ENCODE measurements at regions of chr11 and their contacts with region 1.

Region 1: DNA sequence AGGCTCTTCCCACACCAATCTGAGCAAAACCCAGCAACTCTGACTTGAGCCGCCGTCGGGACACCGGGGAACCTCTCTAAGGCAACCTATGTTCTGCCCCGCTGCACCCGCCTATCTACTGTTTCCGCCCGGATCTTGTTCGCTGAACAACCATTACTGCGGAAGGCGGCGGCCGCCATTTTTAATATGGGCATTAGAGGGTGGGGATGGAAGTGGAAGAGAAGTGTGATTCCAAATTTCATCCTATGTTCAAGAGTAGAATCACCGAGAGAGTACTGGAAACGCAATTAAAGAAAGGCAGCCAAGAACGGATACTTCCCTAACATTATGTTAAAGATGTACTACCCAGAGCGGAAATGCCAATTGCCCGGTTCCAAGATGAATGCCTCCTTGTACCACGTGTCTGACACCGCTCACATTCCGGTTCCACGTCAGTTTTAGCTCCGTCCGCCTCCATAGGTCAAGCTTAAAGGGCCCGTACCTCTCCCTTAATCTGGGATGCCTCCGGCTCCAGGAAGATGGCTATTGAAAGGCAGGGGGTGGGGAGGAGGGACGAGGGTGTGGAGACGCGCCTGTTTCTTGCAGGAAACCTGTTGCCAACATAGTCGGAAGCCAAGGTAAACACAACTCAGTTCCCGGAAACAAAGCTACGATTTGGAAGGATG is at the start of gene DPAGT1:
- DNase-seq: peak; percentile 81
- ATAC-seq: peak; percentile 82
- H3K4me3 Mint-ChIP-seq: peak within 1 kb of the TSS; percentile 95
- H3K27ac Mint-ChIP-seq: peak within 1 kb of the TSS; percentile 99
- H3K4me1 Mint-ChIP-seq: peaks cover 30% of the 10 kb centered on the region
- H3K27me3 Mint-ChIP-seq: no peaks in the 10 kb centered on the region
- total RNA-seq, gene DPAGT1: 43.2 to 56.1 TPM

Region 2: DNA sequence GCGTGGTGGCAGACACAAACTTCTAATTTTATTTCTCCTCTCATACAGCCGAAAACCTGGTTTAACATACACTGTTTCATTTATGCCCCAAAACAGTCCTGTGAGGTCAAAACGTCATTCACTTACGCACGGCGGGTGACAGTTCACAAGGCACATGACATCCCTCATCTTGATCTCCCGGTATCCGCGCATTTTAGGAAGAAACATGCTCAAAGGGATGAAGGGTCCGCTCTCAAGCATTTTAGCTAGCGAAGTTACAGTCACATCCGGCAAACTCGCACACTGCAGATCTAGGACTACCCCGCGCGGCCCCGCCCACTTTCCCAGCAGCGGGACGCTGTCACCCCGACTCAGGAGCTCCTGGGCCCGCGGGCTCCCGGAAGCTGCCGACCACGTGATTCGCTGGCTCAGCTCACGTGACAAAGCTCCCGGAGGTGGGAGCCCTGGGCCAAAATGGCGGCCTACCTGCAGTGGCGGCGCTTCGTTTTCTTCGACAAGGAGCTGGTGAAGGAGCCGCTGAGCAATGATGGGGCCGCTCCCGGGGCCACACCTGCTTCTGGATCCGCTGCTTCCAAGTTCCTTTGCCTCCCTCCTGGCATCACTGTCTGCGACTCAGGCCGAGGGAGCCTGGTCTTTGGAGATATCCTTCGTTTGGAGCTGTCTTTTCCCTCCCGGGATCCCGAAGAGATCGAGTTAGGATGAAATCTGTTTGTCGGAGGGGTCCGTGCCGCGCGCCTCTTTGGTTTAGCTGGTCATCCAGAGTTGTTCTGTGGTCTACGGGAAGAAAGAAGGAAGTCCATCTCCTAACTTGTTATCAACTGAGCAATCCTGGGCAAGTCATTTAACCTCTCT is 34.3 kb before region 1 on chr11 and contains the start of gene VPS11:
- POLR2A ChIA-PET with region 1: interaction called, 20 read pairs
- DNase-seq: peak; percentile 98
- ATAC-seq: peak; percentile 99
- H3K4me3 Mint-ChIP-seq: peak within 1 kb of the TSS; percentile 92
- H3K27ac Mint-ChIP-seq: peak within 1 kb of the TSS; percentile 96
- H3K4me1 Mint-ChIP-seq: peaks cover 30% of the 10 kb centered on the region
- H3K27me3 Mint-ChIP-seq: no peaks in the 10 kb centered on the region
- total RNA-seq, gene VPS11: 41.2 to 46.2 TPM

Region 3: GRCh38 chr11:119115484-119116234 is 13.8 kb after region 1 on chr11:
- POLR2A ChIA-PET with region 1: interaction called, 20 read pairs
- DNase-seq: peak; percentile 50
- ATAC-seq: peak; percentile 83
- H3K4me3 Mint-ChIP-seq: peak overlapping the region; percentile 82
- H3K27ac Mint-ChIP-seq: peak overlapping the region; percentile 96
- H3K4me1 Mint-ChIP-seq: peaks cover 22% of the 10 kb centered on the region
- H3K27me3 Mint-ChIP-seq: no peaks in the 10 kb centered on the region

Region 4: GRCh38 chr11:119168471-119169281 is 66.8 kb after region 1 on chr11 and contains the start of gene NLRX1:
- POLR2A ChIA-PET with region 1: interaction called, 18 read pairs
- DNase-seq: peak; percentile 84
- ATAC-seq: peak; percentile 89
- H3K4me3 Mint-ChIP-seq: peak within 1 kb of the TSS; percentile 92
- H3K27ac Mint-ChIP-seq: peak within 1 kb of the TSS; percentile 94
- H3K4me1 Mint-ChIP-seq: peaks cover 19% of the 10 kb centered on the region
- H3K27me3 Mint-ChIP-seq: no peaks in the 10 kb centered on the region
- total RNA-seq, gene NLRX1: 20.7 to 25.2 TPM

Region 5: GRCh38 chr11:119323538-119324033 is 221.7 kb after region 1 on chr11:
- POLR2A ChIA-PET with region 1: interaction called, 11 read pairs
- DNase-seq: peak; percentile 79
- ATAC-seq: no peak
- H3K4me3 Mint-ChIP-seq: no peak overlapping the region
- H3K27ac Mint-ChIP-seq: no peak overlapping the region
- H3K4me1 Mint-ChIP-seq: peaks cover 16% of the 10 kb centered on the region
- H3K27me3 Mint-ChIP-seq: peaks cover 10% of the 10 kb centered on the region